A673 (cell line): ENCODE measurements at regions of chr4 and their contacts with region 1.

Region 1: DNA sequence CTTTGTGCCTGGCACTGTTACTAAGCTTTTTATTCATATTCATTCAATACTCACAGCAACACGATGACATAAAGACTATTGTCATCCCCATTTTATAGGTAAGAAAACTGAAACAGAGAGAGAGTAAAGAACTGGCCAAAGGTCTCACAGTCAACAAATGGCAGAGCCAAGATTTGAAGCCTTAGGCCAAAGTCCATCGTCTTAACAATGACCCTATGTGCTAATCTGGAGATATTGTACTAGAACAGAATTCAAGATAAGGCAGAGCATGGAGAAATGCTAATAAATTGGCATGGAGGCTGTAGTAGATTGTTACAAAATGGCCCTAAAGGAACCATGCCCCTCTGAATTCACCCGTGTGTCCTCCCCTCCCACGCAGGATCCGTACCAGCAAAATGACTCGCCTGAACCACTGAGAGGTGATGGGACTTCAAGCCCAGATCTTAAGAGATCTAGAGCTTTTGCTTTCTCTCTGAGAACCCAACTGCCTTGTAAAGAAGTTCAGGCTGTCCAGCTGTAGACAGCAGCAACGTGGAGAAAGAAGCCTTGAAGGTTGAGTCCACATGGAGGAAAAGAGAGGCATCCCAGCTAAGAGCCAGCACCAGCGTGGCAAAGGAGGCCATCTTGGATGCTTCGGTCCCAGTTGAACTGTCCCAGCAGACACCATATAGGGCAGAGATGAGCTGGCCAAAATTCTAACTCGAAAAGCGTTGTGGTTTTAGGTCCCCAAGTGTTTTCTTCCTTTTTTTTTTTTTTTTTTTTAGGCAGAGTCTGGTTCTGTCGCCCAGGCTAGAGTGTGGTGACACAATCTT is 52.8 kb upstream of the RBM47 start:
- DNase-seq: no peak
- H3K4me3 ChIP-seq: no peak overlapping the region
- H3K27ac ChIP-seq: no peak overlapping the region
- H3K4me1 ChIP-seq: no peaks in the 10 kb centered on the region
- H3K27me3 ChIP-seq: no peaks in the 10 kb centered on the region
- CTCF ChIP-seq: no peak

Region 2: GRCh38 chr4:40848940-40849339 is 166.4 kb after region 1 on chr4:
- CTCF ChIA-PET with region 1: no interaction called
- POLR2A ChIA-PET with region 1: interaction called, 11 read pairs
- intact Hi-C with region 1: no loop called
- DNase-seq: no peak
- H3K4me3 ChIP-seq: no peak overlapping the region
- H3K27ac ChIP-seq: no peak overlapping the region
- H3K4me1 ChIP-seq: no peaks in the 10 kb centered on the region
- H3K27me3 ChIP-seq: no peaks in the 10 kb centered on the region
- CTCF ChIP-seq: no peak

Region 3: GRCh38 chr4:40881096-40881495 is 198.6 kb after region 1 on chr4:
- CTCF ChIA-PET with region 1: no interaction called
- POLR2A ChIA-PET with region 1: no interaction called
- intact Hi-C with region 1: no loop called
- DNase-seq: no peak
- H3K4me3 ChIP-seq: no peak overlapping the region
- H3K27ac ChIP-seq: no peak overlapping the region
- H3K4me1 ChIP-seq: no peaks in the 10 kb centered on the region
- H3K27me3 ChIP-seq: no peaks in the 10 kb centered on the region
- CTCF ChIP-seq: no peak

Region 4: GRCh38 chr4:41394362-41394960 is 712.0 kb after region 1 on chr4:
- CTCF ChIA-PET with region 1: no interaction called
- POLR2A ChIA-PET with region 1: no interaction called
- intact Hi-C with region 1: no loop called
- DNase-seq: no peak
- H3K4me3 ChIP-seq: no peak overlapping the region
- H3K27ac ChIP-seq: no peak overlapping the region
- H3K4me1 ChIP-seq: no peaks in the 10 kb centered on the region
- H3K27me3 ChIP-seq: no peaks in the 10 kb centered on the region
- CTCF ChIP-seq: no peak